ENCODE measurements at regions of chr5 and their contacts with region 1.

Region 1: DNA sequence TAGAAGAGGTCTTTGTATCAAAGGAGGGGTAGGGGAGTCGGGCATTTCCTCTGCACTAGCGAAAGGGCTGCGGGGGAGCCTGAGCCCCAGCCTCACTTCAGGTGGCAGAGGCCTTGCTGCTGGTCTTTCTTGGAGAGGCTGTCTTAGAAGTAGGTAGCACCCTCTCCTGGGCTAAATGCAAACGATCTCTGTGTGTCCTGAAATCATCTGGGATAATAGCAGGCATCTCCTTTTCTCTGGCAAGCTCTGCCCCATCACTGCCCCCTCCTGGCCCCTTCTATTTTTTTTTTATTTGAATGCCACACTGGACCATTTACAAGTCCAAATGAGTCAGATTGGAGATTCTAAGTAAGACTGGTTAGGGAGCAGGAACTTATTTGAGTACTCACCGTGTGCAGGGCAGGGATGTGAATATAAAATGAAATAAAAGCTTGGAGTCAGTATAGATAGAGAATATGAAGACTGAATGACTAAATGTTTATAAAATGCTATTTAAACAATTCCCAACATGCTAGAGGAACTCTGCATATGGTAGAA is 137.1 kb downstream of the FGF1 start:
- DNase-seq: peak; percentile 79 to 93
- ATAC-seq: peak; percentile 98 to 100
- H3K4me3 ChIP-seq: no peak overlapping the region
- H3K27ac ChIP-seq: no peak overlapping the region; a peak in 1 of 6 replicates
- H3K4me1 ChIP-seq: peaks cover 2% of the 10 kb centered on the region; the same call in 1 of the 3 replicates
- CTCF ChIP-seq: peak; percentile 98
- EP300 ChIP-seq: no peak
- POLR2A ChIP-seq: no peak
- RAD21 ChIP-seq: peak; percentile 98 to 99

Region 2: GRCh38 chr5:142145106-142145900 is 403.5 kb before region 1 on chr5:
- CTCF ChIA-PET with region 1: interaction called, 46 read pairs
- POLR2A ChIA-PET with region 1: no interaction called
- DNase-seq: peak; percentile 57 to 73
- ATAC-seq: peak; percentile 93 to 97
- H3K4me3 ChIP-seq: no peak overlapping the region
- H3K27ac ChIP-seq: no peak overlapping the region
- H3K4me1 ChIP-seq: no peaks in the 10 kb centered on the region
- CTCF ChIP-seq: peak; percentile 72
- EP300 ChIP-seq: no peak
- POLR2A ChIP-seq: no peak
- RAD21 ChIP-seq: peak; percentile 35 to 59; a peak in 3 of 5 replicates

Region 3: GRCh38 chr5:142156839-142157463 is 391.9 kb before region 1 on chr5:
- CTCF ChIA-PET with region 1: interaction called, 46 read pairs
- POLR2A ChIA-PET with region 1: no interaction called
- DNase-seq: no peak
- ATAC-seq: no peak
- H3K4me3 ChIP-seq: no peak overlapping the region
- H3K27ac ChIP-seq: no peak overlapping the region
- H3K4me1 ChIP-seq: no peaks in the 10 kb centered on the region
- CTCF ChIP-seq: no peak
- EP300 ChIP-seq: no peak
- POLR2A ChIP-seq: no peak
- RAD21 ChIP-seq: no peak

Region 4: GRCh38 chr5:142324871-142325724 is 223.7 kb before region 1 on chr5 and contains the start of gene SPRY4:
- CTCF ChIA-PET with region 1: interaction called, 20 read pairs
- POLR2A ChIA-PET with region 1: no interaction called
- DNase-seq: peak; percentile 93 to 97
- ATAC-seq: peak; percentile 67 to 78
- H3K4me3 ChIP-seq: peak within 1 kb of the TSS; percentile 51
- H3K27ac ChIP-seq: peak within 1 kb of the TSS; percentile 89 to 100
- H3K4me1 ChIP-seq: peaks cover 45% of the 10 kb centered on the region
- CTCF ChIP-seq: peak; percentile 7; the same call in 1 of the 3 replicates
- EP300 ChIP-seq: no peak
- POLR2A ChIP-seq: peak; percentile 98
- RAD21 ChIP-seq: no peak; a peak in 1 of 5 replicates
- polyA plus RNA-seq, gene SPRY4: 5.7 and 6.7 TPM in 2 replicates

Region 5: GRCh38 chr5:142507531-142508372 is 41.1 kb before region 1 on chr5:
- CTCF ChIA-PET with region 1: interaction called, 14 read pairs
- POLR2A ChIA-PET with region 1: no interaction called
- DNase-seq: peak in 1 of 2 experiments; percentile 38
- ATAC-seq: peak; percentile 52 to 77; a peak in 3 of 6 replicates
- H3K4me3 ChIP-seq: no peak overlapping the region
- H3K27ac ChIP-seq: peak overlapping the region; percentile 28 to 53; a peak in 5 of 6 replicates
- H3K4me1 ChIP-seq: peaks cover 36% of the 10 kb centered on the region
- CTCF ChIP-seq: no peak
- EP300 ChIP-seq: no peak
- POLR2A ChIP-seq: no peak
- RAD21 ChIP-seq: no peak

Region 6: DNA sequence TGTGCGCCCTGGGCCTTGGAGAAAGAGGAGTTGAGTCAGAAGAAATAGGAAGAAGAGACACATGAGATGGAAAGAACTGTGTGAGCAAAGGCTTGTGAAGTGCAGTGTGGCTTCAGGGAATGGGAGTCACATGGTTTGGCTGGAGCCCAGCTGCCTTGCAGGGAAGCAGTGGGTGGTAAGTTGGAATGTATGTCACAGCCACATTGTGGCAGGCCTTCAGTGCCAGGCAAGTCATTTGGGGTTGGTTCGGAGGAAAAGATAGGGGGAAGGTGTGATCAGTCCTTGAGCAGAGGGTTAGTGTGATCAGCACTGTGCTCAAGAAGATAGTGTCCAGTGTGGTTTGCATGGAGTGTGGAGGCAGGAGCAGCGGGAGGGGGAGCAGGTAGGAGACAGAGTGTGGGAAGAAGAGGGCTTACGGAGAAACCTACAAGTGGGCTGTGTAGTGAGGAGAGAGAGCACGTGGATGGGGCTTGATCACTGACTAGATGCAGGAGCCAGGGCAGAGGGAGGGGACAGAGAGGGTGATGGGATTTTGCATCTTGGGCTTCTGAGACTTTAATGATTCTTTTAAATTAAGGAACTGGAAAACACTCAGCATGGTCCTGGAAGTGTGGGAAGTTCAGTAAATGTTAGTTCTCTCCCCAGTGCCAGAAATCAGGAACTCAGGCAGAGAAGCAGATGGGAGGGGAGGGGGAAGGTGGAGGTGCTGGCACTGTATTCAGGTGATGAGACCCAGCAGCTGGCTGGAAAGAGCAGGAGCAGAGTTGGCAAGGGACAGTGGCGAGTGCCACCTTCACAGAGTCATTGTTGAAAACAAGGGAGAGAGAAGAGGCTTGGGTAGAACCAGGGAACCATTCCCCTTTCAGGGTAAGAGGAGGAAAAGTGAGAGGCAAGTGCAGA is 268.0 kb after region 1 on chr5:
- CTCF ChIA-PET with region 1: no interaction called
- POLR2A ChIA-PET with region 1: no interaction called
- DNase-seq: no peak
- ATAC-seq: peak in 1 of 2 experiments; percentile 20; a peak in 3 of 6 replicates
- H3K4me3 ChIP-seq: no peak overlapping the region
- H3K27ac ChIP-seq: peak overlapping the region; percentile 16 to 87; a peak in 4 of 6 replicates
- H3K4me1 ChIP-seq: peaks cover 61% of the 10 kb centered on the region
- CTCF ChIP-seq: no peak
- EP300 ChIP-seq: no peak
- POLR2A ChIP-seq: no peak
- RAD21 ChIP-seq: no peak